Transverse colon (tissue), 4 donors: ENCODE measurements at regions of chr3 and their contacts with region 1.

Region 1: GRCh38 chr3:185176750-185177359 is 24.0 kb upstream of the C3orf70 start:
- DNase-seq: peak; percentile 54
- H3K4me3 ChIP-seq: no peak overlapping the region
- H3K27ac ChIP-seq: peak overlapping the region; percentile 84 to 90 (median 86)
- H3K4me1 ChIP-seq: peaks cover 5 to 44% (median 25%) of the 10 kb centered on the region in 4 donors
- H3K27me3 ChIP-seq: no peaks in the 10 kb centered on the region
- CTCF ChIP-seq: peak; percentile 67 to 81 (median 73)
- EP300 ChIP-seq: no peak
- POLR2A ChIP-seq: no peak

Region 2: DNA sequence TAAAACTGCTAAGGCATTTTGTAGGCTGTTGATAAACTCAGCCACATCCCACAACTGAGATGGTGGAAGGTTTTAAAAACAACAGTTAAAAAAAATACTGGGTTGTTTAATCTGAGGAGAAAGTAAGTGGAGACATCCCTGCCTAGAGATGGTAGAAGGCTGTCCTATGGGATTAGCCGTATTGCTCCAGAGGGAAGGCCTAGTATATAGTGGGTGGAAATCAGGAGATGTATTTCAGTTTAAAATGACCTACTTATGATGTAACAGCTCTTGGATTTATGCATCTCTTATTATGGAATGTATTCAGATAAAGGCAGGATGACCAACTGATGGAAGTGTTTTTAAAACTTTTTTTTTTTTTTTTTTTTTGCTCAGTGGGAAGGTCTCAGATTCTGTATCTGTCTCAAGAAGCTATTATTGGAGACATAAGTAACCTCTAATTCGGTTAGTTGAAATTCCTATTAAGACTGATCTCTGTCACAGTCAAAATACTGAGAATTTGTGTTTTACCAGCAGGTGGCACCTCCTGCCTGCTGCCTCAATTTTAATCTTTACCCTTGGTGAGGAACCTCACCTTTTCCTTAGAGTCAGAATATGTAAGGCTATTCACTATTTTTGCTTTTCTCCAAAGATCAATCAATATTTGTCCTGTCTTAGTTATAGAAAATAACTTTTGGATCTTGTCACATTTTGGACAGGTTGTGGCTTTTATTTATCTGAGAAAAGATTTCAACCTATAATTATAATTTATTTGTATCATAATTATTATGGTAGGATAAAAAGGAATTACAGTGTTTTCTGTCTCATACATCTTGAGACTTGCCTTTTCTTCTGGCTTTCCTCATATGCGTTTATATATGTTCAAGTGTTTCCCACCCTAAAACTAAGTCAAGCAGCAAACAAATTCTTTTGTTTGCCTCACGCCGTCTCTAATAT is 301.9 kb before region 1 on chr3:
- in situ Hi-C with region 1: loop called (anchors 10 to 25 kb)
- intact Hi-C with region 1: no loop called
- DNase-seq: peak; percentile 11
- H3K4me3 ChIP-seq: no peak overlapping the region
- H3K27ac ChIP-seq: no peak overlapping the region
- H3K4me1 ChIP-seq: no peaks in the 10 kb centered on the region
- H3K27me3 ChIP-seq: no peaks in the 10 kb centered on the region
- CTCF ChIP-seq: peak; percentile 48 to 67 (median 56)
- EP300 ChIP-seq: no peak
- POLR2A ChIP-seq: no peak

Region 3: GRCh38 chr3:185069037-185070030 is 107.5 kb before region 1 on chr3:
- in situ Hi-C with region 1: no loop called
- intact Hi-C with region 1: loop called (anchors 5 kb)
- DNase-seq: peak; percentile 83
- H3K4me3 ChIP-seq: no peak overlapping the region
- H3K27ac ChIP-seq: peak overlapping the region; percentile 79 to 82 (median 80)
- H3K4me1 ChIP-seq: peaks cover 12 to 24% (median 20%) of the 10 kb centered on the region in 4 donors
- H3K27me3 ChIP-seq: no peaks in the 10 kb centered on the region
- CTCF ChIP-seq: peak in 3 of 5 experiments; percentile 5 to 18 (median 12)
- EP300 ChIP-seq: no peak
- POLR2A ChIP-seq: no peak

Region 4: DNA sequence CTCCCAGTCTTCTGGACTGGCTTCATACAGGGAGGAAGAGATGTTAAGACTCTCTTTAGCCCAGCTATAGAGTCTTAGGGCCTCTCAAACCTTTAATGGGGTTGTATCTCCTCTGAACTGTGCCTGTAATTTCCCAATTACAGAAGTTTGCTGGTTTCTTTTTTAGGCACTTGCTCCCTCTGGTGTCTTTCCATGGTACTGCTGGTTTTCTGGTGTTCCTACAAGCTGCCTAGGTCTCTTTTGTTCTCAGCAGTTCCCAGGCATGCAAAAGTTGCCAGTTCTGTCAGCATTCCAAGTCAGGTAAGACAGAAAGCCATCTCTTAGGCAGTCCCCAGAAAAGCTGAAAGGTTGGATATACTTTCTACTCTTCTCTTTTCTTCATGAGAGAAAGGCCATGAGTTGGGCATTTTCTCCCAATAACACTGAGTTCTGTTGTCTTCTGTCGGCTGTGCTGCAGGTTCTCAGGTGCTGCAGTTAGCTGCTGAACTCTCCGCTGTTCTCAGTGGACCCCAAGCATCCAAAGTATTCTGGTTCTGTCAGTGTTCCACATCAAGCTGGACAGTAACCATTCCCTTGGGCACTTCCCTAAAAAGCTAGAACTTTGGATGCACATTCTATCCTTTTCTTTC is 131.4 kb after region 1 on chr3:
- in situ Hi-C with region 1: no loop called
- intact Hi-C with region 1: no loop called
- DNase-seq: peak; percentile 63
- H3K4me3 ChIP-seq: no peak overlapping the region
- H3K27ac ChIP-seq: no peak overlapping the region
- H3K4me1 ChIP-seq: peaks cover 0 to 14% (median 0%) of the 10 kb centered on the region in 4 donors
- H3K27me3 ChIP-seq: no peaks in the 10 kb centered on the region
- CTCF ChIP-seq: peak; percentile 59 to 71 (median 65)
- EP300 ChIP-seq: no peak
- POLR2A ChIP-seq: no peak